ENCODE measurements at regions of chr18 and their contacts with region 1.

Region 1: GRCh38 chr18:50009773-50010335 is 185.1 kb downstream of the MYO5B start:
- DNase-seq: peak in 13 of 14 experiments; percentile 1 to 71 (median 24)
- ATAC-seq: peak; percentile 64
- H3K4me3 ChIP-seq: no peak overlapping the region
- H3K4me3 Mint-ChIP-seq: no peak overlapping the region
- H3K27ac ChIP-seq: no peak overlapping the region
- H3K27ac Mint-ChIP-seq: no peak overlapping the region
- H3K4me1 ChIP-seq: no peaks in the 10 kb centered on the region
- H3K4me1 Mint-ChIP-seq: no peaks in the 10 kb centered on the region
- H3K27me3 ChIP-seq: no peaks in the 10 kb centered on the region
- H3K27me3 Mint-ChIP-seq: no peaks in the 10 kb centered on the region
- CTCF ChIP-seq: peak; percentile 41

Region 2: DNA sequence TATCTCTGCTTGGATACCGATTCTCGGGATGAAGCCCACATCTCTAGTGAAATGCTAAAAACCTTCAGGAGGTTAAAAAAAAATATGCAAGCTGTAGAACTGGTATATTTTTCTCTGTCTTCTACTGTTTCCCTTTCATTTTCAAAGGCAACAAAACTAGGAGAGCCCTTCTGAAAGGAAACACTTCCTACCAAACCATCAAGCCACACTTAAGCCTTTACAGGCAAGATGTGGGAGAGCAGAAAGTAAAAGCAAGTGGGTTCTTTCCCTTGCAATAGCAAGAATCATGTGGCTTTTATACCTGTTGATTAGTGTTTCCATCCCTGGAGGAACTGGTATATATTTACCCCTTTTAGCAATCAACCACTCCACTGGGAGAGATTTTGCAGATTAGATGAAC is 48.6 kb before region 1 on chr18:
- CTCF ChIA-PET with region 1: no interaction called
- POLR2A ChIA-PET with region 1: no interaction called
- intact Hi-C with region 1: loop called in 1 of 2 experiments (anchors 5 kb)
- DNase-seq: no peak
- ATAC-seq: no peak
- H3K4me3 ChIP-seq: no peak overlapping the region
- H3K4me3 Mint-ChIP-seq: no peak overlapping the region
- H3K27ac ChIP-seq: no peak overlapping the region
- H3K27ac Mint-ChIP-seq: no peak overlapping the region
- H3K4me1 ChIP-seq: peaks cover 19% of the 10 kb centered on the region
- H3K4me1 Mint-ChIP-seq: peaks cover 36% of the 10 kb centered on the region
- H3K27me3 ChIP-seq: no peaks in the 10 kb centered on the region
- H3K27me3 Mint-ChIP-seq: peaks cover 10% of the 10 kb centered on the region
- CTCF ChIP-seq: no peak

Region 3: GRCh38 chr18:49988733-49989132 is 21.1 kb before region 1 on chr18:
- CTCF ChIA-PET with region 1: no interaction called
- POLR2A ChIA-PET with region 1: no interaction called
- intact Hi-C with region 1: no loop called
- DNase-seq: no peak
- ATAC-seq: no peak
- H3K4me3 ChIP-seq: no peak overlapping the region
- H3K4me3 Mint-ChIP-seq: no peak overlapping the region
- H3K27ac ChIP-seq: no peak overlapping the region
- H3K27ac Mint-ChIP-seq: no peak overlapping the region
- H3K4me1 ChIP-seq: no peaks in the 10 kb centered on the region
- H3K4me1 Mint-ChIP-seq: no peaks in the 10 kb centered on the region
- H3K27me3 ChIP-seq: no peaks in the 10 kb centered on the region
- H3K27me3 Mint-ChIP-seq: no peaks in the 10 kb centered on the region
- CTCF ChIP-seq: no peak

Measured in CD4-positive, alpha-beta T cell (primary cell).